GM13976 (cell line): ENCODE measurements at regions of chr11 and their contacts with region 1.

Region 1: DNA sequence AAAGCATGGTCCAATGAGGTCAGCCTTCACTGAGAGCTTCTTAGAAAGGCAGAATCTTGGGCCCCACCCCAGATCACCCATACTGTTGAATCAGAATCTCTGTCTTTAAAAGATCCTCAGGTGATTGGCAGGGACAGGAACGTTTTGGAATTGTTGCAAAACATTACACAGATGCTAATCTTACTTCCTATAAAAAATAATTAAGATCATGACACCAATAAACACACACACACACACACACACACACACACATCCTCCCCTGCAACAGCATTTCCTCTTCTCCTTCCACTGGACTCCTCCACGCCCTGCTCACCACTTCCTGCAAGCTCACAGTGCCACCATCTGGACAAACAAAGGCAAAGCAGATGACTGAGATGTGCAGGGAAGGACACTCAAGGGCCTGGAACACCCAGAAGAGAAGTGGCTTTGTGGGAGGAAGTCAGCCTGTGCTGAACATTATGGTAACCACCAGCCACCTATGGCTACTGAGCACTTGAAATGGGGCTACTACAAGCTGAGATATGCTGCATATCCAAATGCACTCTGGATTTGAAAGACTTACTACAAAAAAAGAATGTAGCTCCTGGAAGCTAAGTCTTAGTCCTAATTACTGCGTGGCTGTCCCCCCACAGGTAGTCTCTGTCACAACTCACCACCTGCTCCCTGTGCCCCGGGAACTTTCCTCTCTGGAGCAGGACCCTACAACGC is 65.6 kb downstream of the BTG4 start:
- DNase-seq: peak; percentile 89
- CTCF ChIP-seq: peak; percentile 97

Region 2: DNA sequence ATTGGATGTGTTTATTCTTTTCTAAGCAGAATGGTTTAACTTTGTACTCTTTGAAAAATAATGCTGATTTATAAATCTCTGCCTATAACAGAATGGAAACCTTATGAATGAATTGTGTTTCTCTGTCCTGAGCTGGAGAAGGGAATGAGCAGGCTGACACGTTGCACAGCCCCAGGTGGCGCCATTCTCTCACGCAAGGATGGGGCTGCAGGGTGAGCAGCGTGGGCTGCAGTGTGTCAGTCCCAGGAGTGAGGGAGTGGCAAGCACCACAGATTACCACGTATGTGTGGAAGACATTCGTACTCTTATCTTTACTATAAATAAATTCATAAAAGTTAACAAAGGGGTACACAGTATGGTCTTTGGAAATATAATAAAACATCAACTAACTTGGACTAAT is 983.4 kb before region 1 on chr11:
- in situ Hi-C with region 1: loop called (anchors 25 kb)
- DNase-seq: no peak
- CTCF ChIP-seq: peak; percentile 29

Region 3: GRCh38 chr11:110711776-110712658 is 734.5 kb before region 1 on chr11 and contains the start of gene ARHGAP20:
- in situ Hi-C with region 1: no loop called
- DNase-seq: peak; percentile 85
- CTCF ChIP-seq: no peak